Dorsolateral prefrontal cortex (tissue), 120 donors: ENCODE measurements at regions of chr6 and their contacts with region 1.

Region 1: DNA sequence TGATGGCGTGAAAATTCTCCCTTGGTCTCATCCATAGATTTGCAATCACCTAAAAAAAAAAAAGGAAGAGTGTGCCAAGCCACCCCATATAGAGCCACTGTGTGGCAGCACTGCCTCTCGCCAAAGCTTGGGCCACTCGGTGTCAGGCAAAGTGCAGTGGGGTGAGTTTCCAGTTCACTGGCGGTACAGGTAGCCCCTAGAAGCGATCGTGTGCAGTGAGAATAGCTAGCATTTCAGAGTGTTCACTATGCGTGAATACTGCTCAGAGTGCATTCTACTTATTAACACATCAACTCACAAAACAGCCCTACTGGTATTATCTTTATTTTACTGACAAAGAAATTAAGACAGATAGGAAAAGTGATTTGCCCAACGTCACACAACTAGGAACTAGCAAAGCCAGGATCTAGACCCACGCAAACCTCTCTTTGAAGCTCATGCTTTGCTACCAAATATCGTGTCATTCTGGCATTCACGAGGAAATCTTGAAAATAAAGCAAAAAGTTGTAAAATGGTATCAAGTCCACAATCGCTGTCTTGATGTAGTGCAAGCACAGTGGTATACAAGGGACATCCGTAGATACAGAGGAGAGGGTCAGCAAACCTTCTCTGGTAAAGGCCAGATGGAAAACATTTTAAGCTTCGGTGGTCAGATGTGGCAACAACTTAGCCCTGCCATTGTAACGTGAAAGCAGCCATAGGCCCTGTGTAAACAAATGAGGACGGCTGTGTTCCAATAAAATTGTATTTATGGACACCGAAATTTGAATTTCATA is 10.4 kb upstream of the GCNT2 start:
- DNase-seq: peak in 7 of 10 donors; percentile 33 to 66 (median 46)
- H3K4me3 ChIP-seq: peak overlapping the region in 24 of 59 donors; percentile 1 to 47 (median 21)
- H3K27ac ChIP-seq: no peak overlapping the region
- H3K27me3 ChIP-seq: no peaks in the 10 kb centered on the region
- CTCF ChIP-seq: peak; percentile 28 to 88 (median 70)

Region 2: DNA sequence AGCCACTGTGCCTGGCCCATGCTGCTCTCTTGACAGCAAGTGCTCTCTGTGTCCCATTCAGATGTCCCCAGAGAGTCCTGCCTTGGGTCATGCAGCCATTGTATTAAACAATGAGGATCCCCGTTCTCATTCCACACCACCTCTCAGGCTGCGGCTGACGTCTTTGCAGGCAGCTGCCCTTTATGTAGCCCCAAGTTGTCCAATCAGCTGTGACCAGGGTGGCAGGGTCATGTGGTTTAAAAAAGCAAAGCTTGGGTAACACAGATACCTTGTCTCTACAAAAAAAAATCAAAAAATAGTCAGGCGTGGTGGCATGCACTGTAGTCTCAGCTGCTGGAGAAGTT is 23.6 kb after region 1 on chr6:
- intact Hi-C with region 1: no loop called
- DNase-seq: no peak
- H3K4me3 ChIP-seq: no peak overlapping the region
- H3K27ac ChIP-seq: no peak overlapping the region
- H3K27me3 ChIP-seq: no peaks in the 10 kb centered on the region
- CTCF ChIP-seq: no peak

Region 3: GRCh38 chr6:10555625-10556309 is 45.0 kb after region 1 on chr6:
- intact Hi-C with region 1: loop called in 1 of 2 experiments (anchors 5 kb)
- DNase-seq: peak; percentile 24 to 84 (median 56)
- H3K4me3 ChIP-seq: peak overlapping the region; percentile 14 to 74 (median 57)
- H3K27ac ChIP-seq: peak overlapping the region in 49 of 59 donors; percentile 1 to 84 (median 54)
- H3K27me3 ChIP-seq: peaks cover 0 to 7% (median 0%) of the 10 kb centered on the region in 45 donors
- CTCF ChIP-seq: peak in 1 of 56 donors; percentile 11

Region 4: DNA sequence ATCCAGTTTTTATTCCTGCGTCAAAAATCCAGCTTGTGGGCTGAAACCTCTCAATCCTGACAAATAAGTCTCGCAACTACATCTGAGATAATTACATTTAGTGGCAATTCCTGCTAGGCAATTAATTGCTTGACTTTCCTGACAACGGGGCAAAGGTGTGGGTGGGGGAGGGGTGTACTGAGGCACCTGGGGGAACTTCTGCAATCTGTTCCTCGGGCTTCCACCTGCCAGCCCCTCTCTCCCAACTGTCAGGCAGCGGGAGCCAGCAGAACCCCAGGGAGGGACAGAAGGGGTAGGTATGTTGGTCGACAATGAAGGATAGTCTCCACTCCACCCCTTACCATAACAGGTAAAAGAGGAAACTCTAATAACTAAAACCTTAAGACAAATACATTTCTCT is 176.8 kb after region 1 on chr6:
- intact Hi-C with region 1: loop called (anchors 5 to 10 kb)
- DNase-seq: no peak
- H3K4me3 ChIP-seq: no peak overlapping the region
- H3K27ac ChIP-seq: no peak overlapping the region
- H3K27me3 ChIP-seq: no peaks in the 10 kb centered on the region
- CTCF ChIP-seq: no peak

Region 5: DNA sequence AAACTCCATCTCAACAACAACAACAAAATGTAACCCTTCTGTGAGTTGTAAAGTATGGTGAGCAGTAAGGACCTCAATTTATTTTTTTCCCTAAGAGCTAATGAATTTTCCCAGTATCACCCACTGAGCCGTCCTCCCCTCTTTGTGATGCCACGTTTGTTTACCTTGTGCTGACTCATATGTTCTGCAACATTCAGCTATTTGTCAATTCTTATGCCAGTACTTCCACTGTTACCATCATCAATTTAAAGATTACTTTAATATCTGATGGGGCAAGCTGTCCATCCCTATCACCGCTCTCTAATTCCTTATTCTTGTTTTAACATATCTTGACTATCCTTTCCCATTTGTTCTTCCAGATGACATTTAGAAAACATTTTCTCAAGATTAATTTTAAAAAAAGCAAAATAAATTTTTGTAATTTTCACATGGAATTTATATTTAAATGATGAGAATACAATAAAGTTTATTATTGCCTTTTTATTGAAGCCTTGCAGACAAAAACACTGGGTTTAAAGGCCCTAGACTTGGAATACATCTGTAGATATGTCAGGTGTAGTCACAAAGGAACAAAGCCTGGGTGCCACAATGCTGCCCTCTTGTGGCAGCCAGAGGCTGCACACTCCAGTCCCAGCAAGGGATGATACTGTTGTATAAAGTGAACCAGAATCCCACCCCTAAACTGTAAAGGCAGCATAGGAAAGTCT is 290.2 kb after region 1 on chr6:
- intact Hi-C with region 1: loop called (anchors 2 to 10 kb)
- DNase-seq: peak; percentile 33 to 77 (median 52)
- H3K4me3 ChIP-seq: no peak overlapping the region
- H3K27ac ChIP-seq: no peak overlapping the region
- H3K27me3 ChIP-seq: no peaks in the 10 kb centered on the region
- CTCF ChIP-seq: peak; percentile 82 to 99 (median 96)